ENCODE measurements at regions of chr9 and their contacts with region 1.

Region 1: DNA sequence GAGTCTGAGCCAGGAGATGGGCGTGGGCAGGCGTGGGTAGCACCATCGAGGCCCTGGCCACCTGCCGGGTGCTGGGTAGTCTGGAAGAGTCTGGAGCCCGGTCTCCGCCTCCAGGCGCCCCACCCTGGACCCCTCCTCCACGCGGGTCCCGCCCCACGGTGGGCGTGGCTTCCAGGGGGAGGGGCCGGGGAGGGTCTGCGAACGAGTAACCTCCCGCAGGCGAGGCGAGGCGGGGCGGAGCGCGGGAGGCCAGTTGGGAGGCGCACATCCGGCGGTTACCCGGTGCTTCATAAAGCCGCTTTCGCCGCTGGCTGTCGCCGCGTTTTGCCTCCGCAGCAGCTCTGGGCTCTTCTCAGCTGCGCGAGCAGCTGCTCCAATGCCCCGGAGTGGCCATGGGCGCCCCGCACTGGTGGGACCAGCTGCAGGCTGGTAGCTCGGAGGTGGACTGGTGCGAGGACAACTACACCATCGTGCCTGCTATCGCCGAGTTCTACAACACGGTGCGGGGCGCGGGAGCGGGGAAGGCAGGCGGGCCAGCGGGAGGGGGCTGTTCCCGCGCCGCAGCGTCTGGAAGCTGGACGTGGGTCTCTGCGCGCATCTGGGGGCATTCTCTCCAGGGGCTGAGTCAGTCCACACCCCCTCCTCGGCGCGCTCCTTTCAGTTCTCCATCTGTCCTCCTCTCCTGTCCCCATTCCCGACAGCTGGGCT is at the start of gene ACER2:
- DNase-seq: peak; percentile 66
- ATAC-seq: peak; percentile 96
- H3K4me3 ChIP-seq: peak within 1 kb of the TSS; percentile 85
- H3K27ac ChIP-seq: 0 out of 2 replicates have a peak within 1 kb of the TSS, but pooled peaks have one; percentile 2
- H3K4me1 ChIP-seq: peaks cover 10% of the 10 kb centered on the region
- H3K27me3 ChIP-seq: peaks cover 0 to 2% of the 10 kb centered on the region in 2 experiments; a peak in 1 of 4 replicates
- CTCF ChIP-seq: peak in 1 of 3 experiments; percentile 5; a peak in 2 of 6 replicates
- EP300 ChIP-seq: no peak
- POLR2A ChIP-seq: peak; percentile 94
- RAD21 ChIP-seq: no peak
- polyA plus RNA-seq, gene ACER2: 0.07 to 0.08 TPM

Region 2: DNA sequence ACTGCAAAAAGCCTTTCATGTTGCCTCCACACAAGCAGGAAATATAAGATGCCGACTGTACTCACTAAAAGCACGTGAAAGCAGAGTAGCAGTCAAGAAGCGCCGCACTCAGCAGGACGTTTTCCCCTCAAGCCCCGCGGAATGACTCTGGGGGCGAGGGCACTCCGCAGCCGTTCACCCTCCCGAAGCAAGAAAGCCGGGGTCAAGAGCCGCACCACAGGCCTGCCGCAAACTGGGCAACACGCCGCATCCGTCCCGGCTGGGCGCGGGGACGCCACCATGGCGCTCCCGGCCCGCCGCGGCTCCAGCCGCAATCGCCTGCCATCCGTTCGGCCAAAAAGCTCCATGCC is 29.2 kb before region 1 on chr9:
- CTCF ChIA-PET with region 1: no interaction called
- POLR2A ChIA-PET with region 1: interaction called, 3 read pairs
- RAD21 ChIA-PET with region 1: no interaction called
- SMC1A ChIA-PET with region 1: no interaction called
- in situ Hi-C with region 1: no loop called
- intact Hi-C with region 1: loop called (anchors 1 kb)
- DNase-seq: no peak
- ATAC-seq: peak; percentile 45
- H3K4me3 ChIP-seq: peak overlapping the region; percentile 82
- H3K27ac ChIP-seq: peak overlapping the region; percentile 88
- H3K4me1 ChIP-seq: peaks cover 5% of the 10 kb centered on the region
- H3K27me3 ChIP-seq: no peaks in the 10 kb centered on the region
- CTCF ChIP-seq: no peak
- EP300 ChIP-seq: no peak
- POLR2A ChIP-seq: no peak
- RAD21 ChIP-seq: no peak

Region 3: GRCh38 chr9:19451240-19452087 is 42.6 kb after region 1 on chr9:
- CTCF ChIA-PET with region 1: interaction called, 5 read pairs
- POLR2A ChIA-PET with region 1: interaction called, 8 read pairs
- RAD21 ChIA-PET with region 1: interaction called, 7 read pairs
- SMC1A ChIA-PET with region 1: interaction called, 3 read pairs
- in situ Hi-C with region 1: no loop called
- intact Hi-C with region 1: loop called (anchors 2 kb)
- DNase-seq: peak; percentile 71
- ATAC-seq: peak; percentile 94
- H3K4me3 ChIP-seq: peak overlapping the region; percentile 25; the same call in 1 of the 2 replicates
- H3K27ac ChIP-seq: peak overlapping the region; percentile 76
- H3K4me1 ChIP-seq: peaks cover 12% of the 10 kb centered on the region
- H3K27me3 ChIP-seq: no peaks in the 10 kb centered on the region
- CTCF ChIP-seq: no peak
- EP300 ChIP-seq: peak in 1 of 2 experiments; percentile 65; a peak in 2 of 4 replicates
- POLR2A ChIP-seq: peak; percentile 35; the same call in 1 of the 2 replicates
- RAD21 ChIP-seq: no peak

Region 4: GRCh38 chr9:19464764-19465585 is 56.1 kb after region 1 on chr9:
- CTCF ChIA-PET with region 1: interaction called, 15 read pairs
- POLR2A ChIA-PET with region 1: no interaction called
- RAD21 ChIA-PET with region 1: no interaction called
- SMC1A ChIA-PET with region 1: no interaction called
- in situ Hi-C with region 1: no loop called
- intact Hi-C with region 1: no loop called
- DNase-seq: no peak
- ATAC-seq: peak; percentile 97
- H3K4me3 ChIP-seq: peak overlapping the region; percentile 69; the same call in 1 of the 2 replicates
- H3K27ac ChIP-seq: no peak overlapping the region
- H3K4me1 ChIP-seq: 0 out of 2 replicates have a peak, but pooled peaks cover 3% of the 10 kb centered on the region
- H3K27me3 ChIP-seq: no peaks in the 10 kb centered on the region
- CTCF ChIP-seq: peak; percentile 67 to 73 (median 69)
- EP300 ChIP-seq: no peak
- POLR2A ChIP-seq: no peak
- RAD21 ChIP-seq: 0 out of 2 replicates have a peak, but pooled peaks have one; percentile 16

Measured in GM12878 (cell line).